GM18951 (cell line): ENCODE measurements at regions of chr12 and their contacts with region 1.

Region 1: GRCh38 chr12:44930972-44931600 is 55.0 kb upstream of the NELL2 start:
- POLR2A ChIP-seq: no peak

Region 2: GRCh38 chr12:43957732-43958372 is 973.2 kb before region 1 on chr12:
- in situ Hi-C with region 1: loop called (anchors 25 kb)
- POLR2A ChIP-seq: no peak

Region 3: DNA sequence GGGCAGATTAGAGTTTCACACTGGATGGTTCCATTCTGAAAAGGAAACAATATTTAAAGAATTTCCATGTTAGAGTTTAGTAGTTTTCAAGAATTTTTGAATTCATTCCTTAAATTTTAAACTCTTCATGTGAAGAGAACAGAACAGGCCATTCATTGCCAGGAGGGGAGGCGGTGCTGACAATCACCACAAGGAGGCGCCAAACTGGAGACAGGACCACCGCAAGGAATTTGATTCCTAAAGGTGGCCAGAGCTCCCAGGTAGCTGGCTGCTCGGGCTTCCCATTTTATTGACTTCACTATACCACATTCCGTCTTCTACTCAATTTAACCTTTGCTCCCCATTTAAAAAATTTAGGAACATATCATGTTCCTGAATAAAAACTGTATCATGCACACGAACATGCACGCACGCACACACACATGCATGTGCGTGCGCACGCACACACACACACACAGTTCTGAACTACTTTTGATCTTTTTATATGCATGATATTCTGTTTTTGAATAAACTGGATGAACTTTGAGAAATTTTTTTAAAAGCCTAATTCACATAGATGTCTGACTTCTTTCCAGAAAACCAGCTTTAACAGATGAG is 156.2 kb before region 1 on chr12:
- in situ Hi-C with region 1: loop called (anchors 5 kb)
- POLR2A ChIP-seq: no peak

Region 4: GRCh38 chr12:45010059-45010458 is 79.0 kb after region 1 on chr12:
- in situ Hi-C with region 1: no loop called
- POLR2A ChIP-seq: no peak